ENCODE measurements at regions of chr5 and their contacts with region 1.

Region 1: GRCh38 chr5:72465601-72466563 is 41.3 kb downstream of the ZNF366 start:
- DNase-seq: no peak
- H3K27ac ChIP-seq: no peak overlapping the region
- CTCF ChIP-seq: no peak

Region 2: DNA sequence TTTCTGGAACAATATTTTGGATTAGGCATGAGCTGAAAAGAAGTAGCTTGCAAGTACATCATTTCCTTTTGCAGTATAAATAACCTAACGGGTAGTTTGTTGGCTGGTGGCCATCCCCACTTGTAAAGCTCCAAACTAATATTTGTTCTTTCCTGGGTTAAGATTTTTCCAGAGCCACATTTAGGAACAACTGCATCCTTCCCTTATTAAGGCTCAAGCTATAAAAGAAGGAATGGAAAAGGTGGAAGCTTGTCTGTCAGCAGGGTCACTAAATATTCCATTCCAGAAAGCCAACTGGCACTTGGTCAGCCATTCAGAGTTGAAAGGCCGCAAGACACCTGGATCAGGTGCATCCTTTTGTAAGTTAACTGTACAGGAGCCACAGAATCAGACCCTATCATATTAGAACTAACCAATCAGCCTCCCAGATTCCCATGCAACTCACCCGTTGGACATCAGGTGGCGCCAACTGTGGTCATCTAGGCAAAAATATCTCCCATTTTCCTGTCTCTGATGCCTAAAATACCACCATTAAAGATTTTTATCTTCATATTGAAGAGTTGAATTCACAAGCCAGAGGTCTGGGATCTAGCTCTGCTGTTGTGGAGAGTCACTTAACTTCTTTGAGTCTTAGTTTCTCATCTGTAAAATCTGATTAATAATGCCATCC is 62.8 kb before region 1 on chr5:
- CTCF ChIA-PET with region 1: no interaction called
- POLR2A ChIA-PET with region 1: no interaction called
- DNase-seq: no peak
- H3K27ac ChIP-seq: no peak overlapping the region
- CTCF ChIP-seq: 0 out of 2 replicates have a peak, but pooled peaks have one; percentile 12

Region 3: DNA sequence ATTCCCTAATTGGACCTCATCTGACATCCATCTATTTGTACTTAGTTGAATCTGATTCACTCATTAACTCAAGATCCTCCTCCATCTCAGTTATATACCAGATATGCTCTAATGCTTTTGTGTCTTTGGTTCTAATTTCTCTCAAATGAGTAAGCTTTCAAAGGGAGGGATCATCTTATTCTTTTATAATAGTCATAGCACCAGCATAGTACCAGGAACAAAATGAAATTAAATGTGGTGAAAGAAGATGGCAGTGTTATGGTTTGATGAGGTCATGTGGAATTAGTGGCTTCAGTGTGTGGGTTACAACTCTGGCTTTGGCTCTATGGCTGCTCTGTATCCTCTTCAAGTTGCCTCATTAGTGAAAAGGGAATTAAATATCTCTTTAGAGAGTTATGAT is 73.8 kb after region 1 on chr5:
- CTCF ChIA-PET with region 1: no interaction called
- POLR2A ChIA-PET with region 1: interaction called, 13 read pairs
- DNase-seq: no peak
- H3K27ac ChIP-seq: no peak overlapping the region
- CTCF ChIP-seq: no peak

Measured in RWPE1 (cell line).